ENCODE measurements at regions of chr3 and their contacts with region 1.

Region 1: GRCh38 chr3:8501371-8502131 is at the start of gene LMCD1:
- DNase-seq: peak; percentile 97
- ATAC-seq: peak; percentile 86
- H3K4me3 ChIP-seq: peak within 1 kb of the TSS; percentile 65
- H3K27ac ChIP-seq: peak within 1 kb of the TSS; percentile 83
- H3K4me1 ChIP-seq: peaks cover 89% of the 10 kb centered on the region
- H3K27me3 ChIP-seq: no peaks in the 10 kb centered on the region
- CTCF ChIP-seq: no peak
- total RNA-seq, gene LMCD1: 8.2 and 9.1 TPM in 2 replicates

Region 2: GRCh38 chr3:8189051-8189450 is 312.5 kb before region 1 on chr3:
- CTCF ChIA-PET with region 1: no interaction called
- POLR2A ChIA-PET with region 1: no interaction called
- intact Hi-C with region 1: no loop called
- DNase-seq: no peak
- ATAC-seq: no peak
- H3K4me3 ChIP-seq: no peak overlapping the region
- H3K27ac ChIP-seq: no peak overlapping the region
- H3K4me1 ChIP-seq: no peaks in the 10 kb centered on the region
- H3K27me3 ChIP-seq: no peaks in the 10 kb centered on the region
- CTCF ChIP-seq: no peak

Region 3: DNA sequence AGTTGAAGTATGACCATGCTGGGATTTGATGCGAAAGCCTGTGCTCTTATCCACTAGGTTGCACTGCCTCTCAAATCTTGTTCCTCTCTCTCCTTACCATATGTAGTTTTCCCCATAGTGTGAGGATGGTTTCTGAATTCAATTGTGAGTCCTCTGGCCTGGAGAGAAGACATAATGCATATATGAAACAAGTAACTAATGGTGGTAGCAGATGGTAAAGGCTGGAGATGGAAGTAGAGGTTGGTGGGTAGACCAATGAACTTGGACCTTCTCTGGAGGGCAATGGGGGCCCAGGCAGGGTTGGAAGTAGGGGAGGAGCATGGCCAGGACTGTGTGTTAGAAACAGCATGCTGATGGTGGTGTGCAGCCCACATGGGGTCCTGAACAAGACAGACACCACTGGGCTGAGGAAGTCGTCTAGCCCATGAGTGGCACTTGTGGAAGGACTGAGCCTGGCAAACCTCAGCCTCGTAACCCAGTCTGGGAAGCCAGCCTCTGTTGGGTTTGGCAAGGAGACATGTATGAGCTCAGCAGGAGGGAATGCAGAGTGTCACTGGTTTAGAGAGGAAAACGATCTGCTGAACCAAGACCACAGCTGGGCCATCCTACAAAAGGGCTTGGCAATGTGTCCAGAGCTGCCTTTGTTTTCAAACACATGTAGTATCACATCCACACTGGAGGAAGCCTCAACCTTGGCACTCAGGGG is 18.4 kb before region 1 on chr3:
- CTCF ChIA-PET with region 1: interaction called, 4 read pairs
- POLR2A ChIA-PET with region 1: interaction called, 8 read pairs
- intact Hi-C with region 1: loop called (anchors 1 kb)
- DNase-seq: peak; percentile 97
- ATAC-seq: peak; percentile 99
- H3K4me3 ChIP-seq: no peak overlapping the region
- H3K27ac ChIP-seq: 0 out of 2 replicates have a peak overlapping the region, but pooled peaks have one; percentile 4
- H3K4me1 ChIP-seq: peaks cover 13% of the 10 kb centered on the region
- H3K27me3 ChIP-seq: no peaks in the 10 kb centered on the region
- CTCF ChIP-seq: no peak

Region 4: GRCh38 chr3:8529738-8530525 is 28.4 kb after region 1 on chr3:
- CTCF ChIA-PET with region 1: no interaction called
- POLR2A ChIA-PET with region 1: no interaction called
- intact Hi-C with region 1: loop called (anchors 1 kb)
- DNase-seq: peak; percentile 77
- ATAC-seq: peak; percentile 88
- H3K4me3 ChIP-seq: peak overlapping the region; percentile 17; the same call in 1 of the 2 replicates
- H3K27ac ChIP-seq: peak overlapping the region; percentile 48
- H3K4me1 ChIP-seq: peaks cover 49% of the 10 kb centered on the region
- H3K27me3 ChIP-seq: no peaks in the 10 kb centered on the region
- CTCF ChIP-seq: no peak

Region 5: DNA sequence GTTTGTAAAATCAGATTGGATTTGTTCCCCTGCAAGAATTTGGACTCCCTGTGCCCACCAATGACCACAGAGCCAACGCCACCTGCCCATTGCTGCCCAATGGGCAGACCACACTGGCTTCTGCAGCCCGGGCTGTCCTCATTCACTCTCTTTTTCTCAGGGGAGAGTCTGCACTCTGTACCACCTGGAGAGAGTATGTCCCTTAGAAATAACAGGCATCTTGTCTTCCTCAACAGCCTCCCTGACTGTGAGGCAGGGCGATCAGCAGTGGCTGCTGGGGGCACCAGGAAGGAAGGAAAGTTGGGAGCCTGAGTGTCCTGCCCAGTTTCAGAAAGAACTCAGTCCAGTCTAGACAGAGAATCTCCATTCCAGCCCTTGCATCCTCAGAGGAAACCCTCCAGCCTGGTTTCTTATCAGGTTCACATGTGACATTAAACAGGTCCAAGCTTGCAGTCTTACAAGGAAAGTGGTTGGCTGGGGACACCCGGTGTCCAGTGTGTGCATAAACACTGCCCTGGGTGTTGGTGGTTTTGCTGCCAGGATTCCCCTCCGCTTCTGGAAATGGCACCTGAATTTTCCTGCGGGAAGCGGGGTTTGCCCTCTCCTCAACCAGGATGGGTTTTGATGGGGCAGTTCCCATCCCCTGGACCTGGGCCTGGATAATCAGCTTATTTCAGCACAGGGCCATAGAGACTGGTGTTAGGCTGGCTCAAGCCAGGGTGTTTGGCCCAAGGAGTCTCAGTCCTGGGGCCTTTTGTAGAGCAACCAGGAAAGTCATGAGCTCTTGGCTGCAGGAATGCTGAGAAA is 105.9 kb after region 1 on chr3:
- CTCF ChIA-PET with region 1: no interaction called
- POLR2A ChIA-PET with region 1: no interaction called
- intact Hi-C with region 1: loop called (anchors 1 kb)
- DNase-seq: peak; percentile 74
- ATAC-seq: peak; percentile 95
- H3K4me3 ChIP-seq: no peak overlapping the region
- H3K27ac ChIP-seq: no peak overlapping the region
- H3K4me1 ChIP-seq: 0 out of 2 replicates have a peak, but pooled peaks cover 6% of the 10 kb centered on the region
- H3K27me3 ChIP-seq: no peaks in the 10 kb centered on the region
- CTCF ChIP-seq: peak; percentile 80

Region 6: GRCh38 chr3:8622873-8623691 is 121.5 kb after region 1 on chr3:
- CTCF ChIA-PET with region 1: no interaction called
- POLR2A ChIA-PET with region 1: interaction called, 10 read pairs
- intact Hi-C with region 1: loop called (anchors 5 kb)
- DNase-seq: peak; percentile 76
- ATAC-seq: peak; percentile 89
- H3K4me3 ChIP-seq: no peak overlapping the region
- H3K27ac ChIP-seq: no peak overlapping the region
- H3K4me1 ChIP-seq: peaks cover 30% of the 10 kb centered on the region
- H3K27me3 ChIP-seq: no peaks in the 10 kb centered on the region
- CTCF ChIP-seq: peak; percentile 98

Region 7: DNA sequence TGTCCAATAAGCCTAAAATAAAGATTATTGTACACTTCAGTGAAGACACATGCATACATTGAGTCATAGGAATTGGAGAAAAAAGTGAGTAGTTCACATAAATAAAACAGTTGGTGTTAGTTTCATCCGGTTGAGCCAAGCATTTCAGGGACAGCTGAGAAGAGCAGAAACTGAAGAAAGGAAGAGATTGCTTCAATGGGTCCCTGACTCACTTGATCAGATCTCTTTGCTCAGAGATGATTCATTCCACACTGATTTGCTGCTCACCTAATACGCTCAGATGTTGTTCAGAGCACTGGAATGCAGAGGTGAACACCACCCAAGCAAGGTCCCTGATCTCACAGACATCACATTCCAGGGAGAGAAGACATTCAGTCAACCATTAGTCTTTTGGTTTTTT is 368.1 kb after region 1 on chr3:
- CTCF ChIA-PET with region 1: no interaction called
- POLR2A ChIA-PET with region 1: no interaction called
- intact Hi-C with region 1: loop called (anchors 1 kb)
- DNase-seq: peak; percentile 99
- ATAC-seq: peak; percentile 95
- H3K4me3 ChIP-seq: no peak overlapping the region
- H3K27ac ChIP-seq: peak overlapping the region; percentile 94
- H3K4me1 ChIP-seq: peaks cover 57% of the 10 kb centered on the region
- H3K27me3 ChIP-seq: no peaks in the 10 kb centered on the region
- CTCF ChIP-seq: no peak

Measured in PC-3 (cell line).